Naive thymus-derived CD8-positive, alpha-beta T cell (primary cell): ENCODE measurements at regions of chr1 and their contacts with region 1.

Region 1: GRCh38 chr1:42700006-42700405 is 17.8 kb downstream of the YBX1 start:
- DNase-seq: no peak
- ATAC-seq: no peak
- H3K4me3 Mint-ChIP-seq: no peak overlapping the region
- H3K27ac Mint-ChIP-seq: peak overlapping the region in 3 of 10 donors; percentile 1 to 81 (median 28)
- H3K4me1 Mint-ChIP-seq: peaks cover 6 to 22% (median 10%) of the 10 kb centered on the region in 4 donors
- H3K27me3 Mint-ChIP-seq: no peaks in the 10 kb centered on the region

Region 2: DNA sequence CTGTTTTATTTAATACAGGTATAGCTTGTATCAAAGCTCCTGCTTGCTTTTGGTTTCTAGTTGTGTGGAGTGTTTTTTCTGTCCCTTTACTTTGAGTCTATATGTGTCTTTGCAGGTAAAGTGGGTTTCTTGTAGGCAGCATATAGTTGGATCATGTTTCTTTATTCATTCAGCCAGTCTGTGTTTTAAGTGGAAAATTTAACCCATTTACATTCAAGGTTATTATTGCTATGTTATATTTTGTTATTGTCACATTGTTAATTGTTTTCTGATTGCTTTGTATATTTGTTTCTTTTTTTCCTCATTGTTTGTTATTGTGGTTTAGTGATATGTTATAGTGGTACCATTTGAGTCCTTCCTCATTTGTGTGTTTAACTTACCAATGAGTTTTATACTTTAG is 13.3 kb after region 1 on chr1:
- POLR2A ChIA-PET with region 1: interaction called, 13 read pairs
- DNase-seq: no peak
- ATAC-seq: no peak
- H3K4me3 Mint-ChIP-seq: no peak overlapping the region
- H3K27ac Mint-ChIP-seq: peak overlapping the region in 2 of 10 donors; percentile 19 to 74
- H3K4me1 Mint-ChIP-seq: peaks cover 4 to 15% (median 12%) of the 10 kb centered on the region in 4 donors
- H3K27me3 Mint-ChIP-seq: no peaks in the 10 kb centered on the region

Region 3: GRCh38 chr1:42766741-42767509 is 66.9 kb after region 1 on chr1 and contains the starts of genes C1orf50 and P3H1:
- POLR2A ChIA-PET with region 1: no interaction called
- DNase-seq: peak; percentile 96 to 100 (median 99)
- ATAC-seq: peak; percentile 88 to 91
- H3K4me3 Mint-ChIP-seq: no peak within 1 kb of the TSS
- H3K27ac Mint-ChIP-seq: peak within 1 kb of the TSS; percentile 84 to 98 (median 95)
- H3K4me1 Mint-ChIP-seq: peaks cover 7 to 40% (median 32%) of the 10 kb centered on the region in 4 donors
- H3K27me3 Mint-ChIP-seq: no peaks in the 10 kb centered on the region
- polyA plus RNA-seq, gene C1orf50: 2.6 to 3.2 (median 3.1) TPM
- polyA plus RNA-seq, gene P3H1: 4.3 to 11.1 (median 6.9) TPM